ENCODE measurements at regions of chr14 and their contacts with region 1.

Region 1: GRCh38 chr14:25049568-25050268 is at the start of gene STXBP6:
- DNase-seq: peak; percentile 89
- H3K4me3 ChIP-seq: peak within 1 kb of the TSS; percentile 72 to 84 (median 78)
- H3K27ac ChIP-seq: peak within 1 kb of the TSS; percentile 80 to 93 (median 86)
- H3K4me1 ChIP-seq: peaks cover 0 to 34% (median 14%) of the 10 kb centered on the region in 4 donors
- H3K27me3 ChIP-seq: no peaks in the 10 kb centered on the region
- CTCF ChIP-seq: no peak
- EP300 ChIP-seq: no peak
- POLR2A ChIP-seq: no peak
- total RNA-seq, gene STXBP6: 7.1 to 16.1 (median 14.8) TPM

Region 2: DNA sequence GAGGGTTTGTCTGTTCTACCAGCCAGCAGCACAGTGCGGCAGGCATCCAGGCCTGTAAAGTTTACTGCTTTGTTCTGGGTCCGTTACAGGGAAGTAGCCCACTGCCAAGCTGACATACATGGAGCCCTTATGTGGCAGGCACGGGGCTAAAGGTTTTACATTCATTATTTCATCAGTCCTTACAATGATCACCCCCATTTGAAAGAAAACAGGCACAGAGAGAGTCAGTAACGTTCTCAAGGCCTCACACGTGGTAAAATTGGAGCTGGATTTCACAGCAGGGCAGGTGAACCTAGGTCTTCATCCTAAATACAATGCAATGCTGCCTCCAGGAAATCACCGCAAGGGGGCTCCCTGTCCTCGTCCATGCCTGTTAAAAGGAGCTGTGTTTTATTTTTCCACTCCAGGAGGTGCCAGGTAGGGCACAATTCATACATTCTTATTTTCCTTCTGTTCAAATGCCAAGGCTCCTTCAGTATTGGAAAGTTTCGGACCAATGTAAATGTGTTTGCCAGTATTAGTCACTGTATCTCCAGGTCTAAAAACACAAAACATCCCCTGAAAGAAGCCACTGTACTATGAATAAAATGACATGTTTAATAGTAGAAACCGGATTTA is 243.5 kb before region 1 on chr14:
- intact Hi-C with region 1: loop called (anchors 2 kb)
- DNase-seq: peak; percentile 74
- H3K4me3 ChIP-seq: no peak overlapping the region
- H3K27ac ChIP-seq: peak overlapping the region in 1 of 4 donors; percentile 11
- H3K4me1 ChIP-seq: peaks cover 0 to 17% (median 2%) of the 10 kb centered on the region in 4 donors
- H3K27me3 ChIP-seq: no peaks in the 10 kb centered on the region
- CTCF ChIP-seq: peak; percentile 46 to 89 (median 78)
- EP300 ChIP-seq: no peak
- POLR2A ChIP-seq: no peak

Region 3: DNA sequence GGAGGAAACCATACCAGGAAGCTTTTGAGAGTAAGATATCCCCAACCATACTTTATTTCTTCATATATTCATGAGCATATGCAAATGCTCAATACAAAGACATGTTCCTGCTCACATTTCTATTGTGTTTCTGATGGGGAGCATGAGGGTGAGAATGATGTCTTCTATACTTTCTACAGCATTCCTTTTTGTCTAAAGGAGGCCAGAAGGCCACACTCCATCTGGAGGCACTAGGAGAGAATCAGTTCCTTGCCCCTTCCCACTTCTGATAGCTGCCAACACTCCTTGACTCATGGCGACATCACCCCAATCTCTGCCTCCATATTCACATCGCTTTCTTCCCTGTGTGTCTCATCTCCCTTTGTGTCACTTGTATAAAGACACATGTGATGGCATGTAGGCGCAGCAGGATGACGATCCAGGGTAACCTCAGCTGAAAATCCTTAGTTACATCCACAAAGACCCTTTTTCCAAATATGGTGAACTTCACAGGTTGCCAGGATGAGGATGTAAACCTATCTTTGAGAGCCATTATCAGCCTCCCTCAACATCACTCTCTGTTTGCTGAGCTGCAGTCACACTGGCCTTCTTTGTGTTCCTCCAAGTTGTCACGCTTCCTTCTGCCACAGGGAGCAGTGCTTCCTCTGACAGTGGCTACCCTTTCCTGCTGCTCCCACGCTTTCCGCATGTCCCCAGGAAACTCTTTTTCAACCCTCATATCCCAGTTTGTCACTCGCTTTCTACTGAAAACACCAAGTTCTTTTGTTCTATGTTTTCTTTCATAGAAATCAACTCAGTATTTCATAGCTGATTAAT is 96.7 kb before region 1 on chr14:
- intact Hi-C with region 1: loop called (anchors 10 kb)
- DNase-seq: no peak
- H3K4me3 ChIP-seq: no peak overlapping the region
- H3K27ac ChIP-seq: no peak overlapping the region
- H3K4me1 ChIP-seq: peaks cover 0 to 21% (median 17%) of the 10 kb centered on the region in 4 donors
- H3K27me3 ChIP-seq: no peaks in the 10 kb centered on the region
- CTCF ChIP-seq: no peak
- EP300 ChIP-seq: no peak
- POLR2A ChIP-seq: no peak

Region 4: GRCh38 chr14:25197885-25198284 is 148.2 kb after region 1 on chr14:
- intact Hi-C with region 1: no loop called
- DNase-seq: no peak
- H3K4me3 ChIP-seq: no peak overlapping the region
- H3K27ac ChIP-seq: no peak overlapping the region
- H3K4me1 ChIP-seq: no peaks in the 10 kb centered on the region
- H3K27me3 ChIP-seq: no peaks in the 10 kb centered on the region
- CTCF ChIP-seq: no peak
- EP300 ChIP-seq: no peak
- POLR2A ChIP-seq: no peak

Measured in sigmoid colon (tissue), 7 donors.